ENCODE measurements at regions of chr6 and their contacts with region 1.

Region 1: GRCh38 chr6:106360410-106360988 is at the start of gene CRYBG1:
- DNase-seq: peak; percentile 70
- ATAC-seq: peak; percentile 88
- H3K4me3 Mint-ChIP-seq: peak within 1 kb of the TSS; percentile 62
- H3K27ac Mint-ChIP-seq: no peak within 1 kb of the TSS
- H3K4me1 Mint-ChIP-seq: peaks cover 11% of the 10 kb centered on the region
- H3K27me3 Mint-ChIP-seq: peaks cover 49% of the 10 kb centered on the region
- total RNA-seq, gene CRYBG1: 34.9 to 36.8 TPM

Region 2: DNA sequence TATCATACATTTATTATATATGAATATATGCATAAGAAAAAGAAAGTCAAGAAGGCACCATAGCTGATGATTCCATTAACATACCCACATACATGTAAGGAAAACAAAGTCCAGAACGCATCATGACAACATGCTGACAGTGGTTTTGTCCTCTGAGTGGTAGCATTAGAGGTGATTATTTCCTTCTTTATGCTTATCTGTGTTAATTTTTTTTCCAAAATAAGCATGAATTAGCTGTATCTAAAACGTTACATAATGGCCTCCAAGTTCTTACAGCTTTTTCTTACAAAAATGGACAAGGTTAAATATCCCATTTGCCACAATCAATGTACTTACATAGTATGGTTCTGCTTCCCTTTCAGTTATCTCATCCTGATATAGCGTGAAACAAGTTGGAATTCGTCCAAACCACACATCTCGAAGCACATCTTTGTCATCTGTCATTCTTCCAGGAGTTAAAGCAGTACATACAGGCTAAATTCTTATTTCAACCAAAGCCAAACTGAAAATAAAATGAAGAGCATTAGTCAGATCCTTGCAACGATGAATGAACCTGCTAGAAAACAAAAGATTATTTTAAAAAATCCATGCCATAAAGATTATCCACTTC is 44.6 kb before region 1 on chr6:
- CTCF ChIA-PET with region 1: no interaction called
- POLR2A ChIA-PET with region 1: no interaction called
- DNase-seq: no peak
- ATAC-seq: no peak
- H3K4me3 Mint-ChIP-seq: no peak overlapping the region
- H3K27ac Mint-ChIP-seq: no peak overlapping the region
- H3K4me1 Mint-ChIP-seq: peaks cover 43% of the 10 kb centered on the region
- H3K27me3 Mint-ChIP-seq: no peaks in the 10 kb centered on the region

Region 3: GRCh38 chr6:106370639-106371038 is 10.1 kb after region 1 on chr6:
- CTCF ChIA-PET with region 1: interaction called, 23 read pairs
- POLR2A ChIA-PET with region 1: no interaction called
- DNase-seq: no peak
- ATAC-seq: no peak
- H3K4me3 Mint-ChIP-seq: no peak overlapping the region
- H3K27ac Mint-ChIP-seq: no peak overlapping the region
- H3K4me1 Mint-ChIP-seq: peaks cover 12% of the 10 kb centered on the region
- H3K27me3 Mint-ChIP-seq: peaks cover 20% of the 10 kb centered on the region